ENCODE measurements at regions of chr20 and their contacts with region 1.

Region 1: GRCh38 chr20:9078826-9079731 is 10.2 kb downstream of the PLCB4 start:
- DNase-seq: no peak
- ATAC-seq: no peak
- H3K4me3 ChIP-seq: no peak overlapping the region
- H3K27ac ChIP-seq: no peak overlapping the region
- H3K4me1 ChIP-seq: no peaks in the 10 kb centered on the region
- H3K27me3 ChIP-seq: no peaks in the 10 kb centered on the region
- CTCF ChIP-seq: no peak
- POLR2A ChIP-seq: no peak
- RAD21 ChIP-seq: no peak

Region 2: GRCh38 chr20:8535403-8536261 is 543.4 kb before region 1 on chr20:
- CTCF ChIA-PET with region 1: no interaction called
- POLR2A ChIA-PET with region 1: no interaction called
- RAD21 ChIA-PET with region 1: no interaction called
- intact Hi-C with region 1: no loop called
- DNase-seq: no peak
- ATAC-seq: peak; percentile 62
- H3K4me3 ChIP-seq: no peak overlapping the region
- H3K27ac ChIP-seq: no peak overlapping the region
- H3K4me1 ChIP-seq: no peaks in the 10 kb centered on the region; a peak in 1 of 4 replicates
- H3K27me3 ChIP-seq: no peaks in the 10 kb centered on the region
- CTCF ChIP-seq: peak in 2 of 3 experiments; percentile 55 to 66; a peak in 4 of 6 replicates
- POLR2A ChIP-seq: no peak
- RAD21 ChIP-seq: no peak

Region 3: DNA sequence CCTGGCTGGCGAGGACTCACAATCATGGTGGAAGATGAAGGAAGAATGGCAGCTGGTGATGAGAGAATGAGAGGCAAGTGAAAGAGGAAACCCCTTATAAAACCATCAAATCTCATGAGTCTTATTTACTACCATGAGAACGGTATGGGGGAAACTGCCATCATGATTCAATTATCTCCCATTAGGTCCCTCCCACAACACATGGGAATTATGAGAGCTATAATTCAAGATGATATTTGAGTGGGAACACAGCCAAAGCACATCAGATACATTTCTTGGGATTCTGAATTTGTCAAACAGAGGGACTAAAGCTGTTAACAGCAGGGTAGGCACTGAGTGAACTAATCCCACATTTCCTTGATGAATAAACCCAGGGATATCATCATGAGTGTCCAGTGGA is 126.4 kb before region 1 on chr20:
- CTCF ChIA-PET with region 1: no interaction called
- POLR2A ChIA-PET with region 1: no interaction called
- RAD21 ChIA-PET with region 1: no interaction called
- intact Hi-C with region 1: no loop called
- DNase-seq: no peak
- ATAC-seq: no peak
- H3K4me3 ChIP-seq: no peak overlapping the region
- H3K27ac ChIP-seq: no peak overlapping the region
- H3K4me1 ChIP-seq: no peaks in the 10 kb centered on the region
- H3K27me3 ChIP-seq: peaks cover 7% of the 10 kb centered on the region; the same call in 1 of the 2 replicates
- CTCF ChIP-seq: no peak
- POLR2A ChIP-seq: no peak
- RAD21 ChIP-seq: no peak

Region 4: GRCh38 chr20:9093218-9093957 is 14.3 kb after region 1 on chr20:
- CTCF ChIA-PET with region 1: no interaction called
- POLR2A ChIA-PET with region 1: no interaction called
- RAD21 ChIA-PET with region 1: no interaction called
- intact Hi-C with region 1: loop called (anchors 1 kb)
- DNase-seq: no peak
- ATAC-seq: no peak
- H3K4me3 ChIP-seq: no peak overlapping the region
- H3K27ac ChIP-seq: no peak overlapping the region
- H3K4me1 ChIP-seq: no peaks in the 10 kb centered on the region
- H3K27me3 ChIP-seq: no peaks in the 10 kb centered on the region
- CTCF ChIP-seq: no peak
- POLR2A ChIP-seq: no peak
- RAD21 ChIP-seq: no peak

Region 5: DNA sequence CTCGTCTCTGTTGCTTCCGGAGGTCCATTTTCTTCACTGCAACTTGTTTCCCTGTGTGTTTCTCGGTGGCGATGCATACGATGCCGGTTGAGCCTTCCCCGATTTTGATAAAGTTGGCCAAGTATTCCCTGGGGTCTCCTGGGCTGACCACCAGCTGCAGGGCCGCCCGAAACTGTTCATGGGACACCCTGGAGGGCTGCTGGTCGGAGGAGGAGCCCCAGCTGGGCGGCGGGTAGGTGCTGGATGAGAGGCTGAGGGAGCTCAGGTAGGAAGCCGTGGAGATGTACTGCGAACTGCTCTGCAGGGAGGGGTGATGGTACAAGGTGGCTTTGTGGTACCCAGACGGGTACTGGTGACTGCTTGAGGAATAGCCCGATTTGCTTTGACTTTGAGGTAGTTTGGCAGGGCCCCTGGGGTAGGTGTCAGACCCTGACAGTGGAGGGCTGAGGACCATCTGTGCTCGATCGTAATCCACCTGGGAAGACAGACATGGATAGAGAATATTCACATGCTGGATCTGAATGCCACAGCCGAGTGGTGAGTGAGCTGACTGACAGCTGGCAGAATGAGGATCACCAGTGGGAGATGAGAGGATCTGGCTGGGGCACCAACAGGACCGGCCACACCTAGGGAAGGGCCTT is 487.0 kb after region 1 on chr20:
- CTCF ChIA-PET with region 1: no interaction called
- POLR2A ChIA-PET with region 1: no interaction called
- RAD21 ChIA-PET with region 1: no interaction called
- intact Hi-C with region 1: no loop called
- DNase-seq: no peak
- ATAC-seq: no peak
- H3K4me3 ChIP-seq: no peak overlapping the region
- H3K27ac ChIP-seq: no peak overlapping the region
- H3K4me1 ChIP-seq: no peaks in the 10 kb centered on the region
- H3K27me3 ChIP-seq: peaks cover 16% of the 10 kb centered on the region; the same call in 1 of the 2 replicates
- CTCF ChIP-seq: no peak
- POLR2A ChIP-seq: no peak
- RAD21 ChIP-seq: no peak